Sigmoid colon (tissue), 7 donors: ENCODE measurements at regions of chr6 and their contacts with region 1.

Region 1: GRCh38 chr6:56693246-56693607 is 50.5 kb upstream of the DST start:
- DNase-seq: peak; percentile 94
- H3K4me3 ChIP-seq: peak overlapping the region; percentile 9 to 46 (median 42)
- H3K27ac ChIP-seq: peak overlapping the region; percentile 81 to 84 (median 82)
- H3K4me1 ChIP-seq: peaks cover 0 to 66% (median 42%) of the 10 kb centered on the region in 4 donors
- H3K27me3 ChIP-seq: no peaks in the 10 kb centered on the region
- CTCF ChIP-seq: no peak
- EP300 ChIP-seq: no peak
- POLR2A ChIP-seq: peak in 1 of 2 donors; percentile 20

Region 2: DNA sequence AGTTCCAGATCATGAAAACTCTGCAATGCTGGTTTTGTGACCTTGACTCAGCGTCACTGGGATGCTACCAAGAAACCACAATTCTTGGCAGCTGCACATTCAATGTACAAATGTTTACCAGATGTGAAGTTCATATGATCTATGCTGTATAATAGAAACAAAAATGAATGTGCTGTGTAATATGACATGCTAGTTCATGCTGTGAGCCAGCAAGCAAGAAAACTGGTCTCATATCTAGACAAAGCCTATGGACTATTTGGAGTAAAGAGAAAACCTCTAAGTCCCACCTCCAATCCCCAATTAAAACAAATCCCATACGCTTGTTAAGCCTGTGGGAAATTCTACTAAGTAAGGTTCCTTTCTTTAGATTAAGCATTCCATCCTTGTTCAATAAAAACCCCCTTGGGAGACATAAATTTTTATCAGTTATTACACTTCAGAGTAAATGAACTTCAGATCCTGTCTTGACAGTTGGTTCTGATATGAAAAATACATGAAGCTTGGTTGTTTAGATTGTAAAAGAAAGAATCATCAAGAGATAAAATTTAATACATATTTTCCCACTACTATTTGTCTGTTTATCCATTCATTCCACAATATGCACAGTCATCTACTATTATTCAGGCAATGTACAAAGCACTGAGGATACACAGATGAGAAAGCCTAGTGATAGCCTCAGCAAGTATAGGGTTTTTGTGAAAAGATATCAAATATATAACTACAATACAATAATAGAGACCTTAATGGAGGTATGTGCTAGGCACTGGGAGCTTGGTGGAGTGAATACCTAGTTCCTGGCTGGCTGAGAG is 466.0 kb before region 1 on chr6:
- intact Hi-C with region 1: no loop called
- DNase-seq: no peak
- H3K4me3 ChIP-seq: no peak overlapping the region
- H3K27ac ChIP-seq: no peak overlapping the region
- H3K4me1 ChIP-seq: peaks cover 0 to 72% (median 65%) of the 10 kb centered on the region in 4 donors
- H3K27me3 ChIP-seq: no peaks in the 10 kb centered on the region
- CTCF ChIP-seq: no peak
- EP300 ChIP-seq: no peak
- POLR2A ChIP-seq: no peak

Region 3: DNA sequence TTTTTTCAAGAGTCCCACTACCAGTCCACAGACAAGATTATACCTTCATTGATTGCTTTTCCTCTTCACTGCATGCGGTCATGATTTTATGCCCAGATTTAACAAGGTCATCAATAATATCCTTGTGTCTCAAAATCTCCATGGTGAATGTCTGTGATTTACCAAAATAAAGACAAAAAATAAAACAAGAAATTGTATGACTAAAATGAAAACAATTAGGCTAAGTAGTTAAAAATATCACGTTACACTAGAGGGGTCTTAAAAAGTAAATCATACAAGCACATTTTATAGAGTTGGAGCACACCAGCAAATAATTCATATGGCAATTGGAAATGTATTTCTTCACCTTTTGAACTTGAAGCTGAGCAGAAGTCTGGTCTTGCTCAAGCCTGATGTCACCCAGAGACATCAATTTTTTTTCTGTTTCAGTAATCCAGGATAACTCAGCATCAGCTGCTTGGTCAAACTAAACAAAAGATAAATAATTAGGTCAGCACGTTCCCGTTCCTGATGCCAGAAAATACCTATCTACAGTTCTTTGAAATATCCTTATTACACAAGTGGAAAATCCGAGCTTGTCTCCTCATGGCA is 176.0 kb before region 1 on chr6:
- intact Hi-C with region 1: no loop called
- DNase-seq: no peak
- H3K4me3 ChIP-seq: no peak overlapping the region
- H3K27ac ChIP-seq: peak overlapping the region; percentile 63 to 96 (median 82)
- H3K4me1 ChIP-seq: peaks cover 0 to 96% (median 63%) of the 10 kb centered on the region in 4 donors
- H3K27me3 ChIP-seq: no peaks in the 10 kb centered on the region
- CTCF ChIP-seq: no peak
- EP300 ChIP-seq: peak; percentile 81 to 97 (median 88)
- POLR2A ChIP-seq: no peak

Region 4: GRCh38 chr6:56652994-56653393 is 40.2 kb before region 1 on chr6:
- intact Hi-C with region 1: loop called (anchors 1 kb)
- DNase-seq: no peak
- H3K4me3 ChIP-seq: no peak overlapping the region
- H3K27ac ChIP-seq: peak overlapping the region in 2 of 4 donors; percentile 19 to 29
- H3K4me1 ChIP-seq: peaks cover 0 to 59% (median 52%) of the 10 kb centered on the region in 4 donors
- H3K27me3 ChIP-seq: no peaks in the 10 kb centered on the region
- CTCF ChIP-seq: no peak
- EP300 ChIP-seq: no peak
- POLR2A ChIP-seq: no peak